ENCODE measurements at regions of chr4 and their contacts with region 1.

Region 1: DNA sequence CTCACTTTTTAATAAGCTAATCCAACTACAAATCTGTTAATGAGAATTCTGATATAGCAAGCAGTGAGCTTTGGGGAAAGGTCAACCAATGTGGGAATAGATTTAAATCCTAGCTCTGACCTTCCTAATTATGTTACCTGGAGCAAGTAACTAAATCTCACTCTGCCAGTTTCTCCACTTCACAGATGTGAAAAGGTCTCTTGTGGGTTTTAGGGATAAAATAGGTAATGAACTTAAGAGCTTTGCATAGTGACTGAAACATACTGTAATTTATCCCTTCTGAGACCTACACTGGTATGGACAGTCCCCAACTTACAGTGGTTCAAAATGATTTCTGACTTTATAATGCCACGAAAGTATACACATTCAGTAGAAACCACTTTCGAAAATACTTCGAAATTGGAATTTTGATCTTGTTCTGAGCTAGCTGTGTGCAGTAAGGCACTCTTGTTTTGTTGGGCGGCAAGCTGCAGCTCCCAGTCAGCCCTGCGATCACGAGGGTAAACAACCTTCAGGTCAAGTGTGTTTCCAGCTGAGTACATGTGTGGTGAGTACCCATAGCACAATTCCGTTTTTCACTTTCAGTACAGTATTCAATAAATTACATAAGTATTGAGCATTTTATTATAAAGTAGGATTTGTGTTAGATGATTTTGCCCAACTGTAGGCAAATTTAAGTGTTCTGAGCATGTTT is 93.7 kb downstream of the ADGRL3 start:
- DNase-seq: no peak
- ATAC-seq: no peak
- H3K4me3 ChIP-seq: no peak overlapping the region
- H3K4me3 Mint-ChIP-seq: no peak overlapping the region
- H3K27ac ChIP-seq: no peak overlapping the region
- H3K27ac Mint-ChIP-seq: no peak overlapping the region
- H3K4me1 ChIP-seq: no peaks in the 10 kb centered on the region
- H3K4me1 Mint-ChIP-seq: no peaks in the 10 kb centered on the region
- H3K27me3 ChIP-seq: no peaks in the 10 kb centered on the region
- H3K27me3 Mint-ChIP-seq: no peaks in the 10 kb centered on the region

Region 2: DNA sequence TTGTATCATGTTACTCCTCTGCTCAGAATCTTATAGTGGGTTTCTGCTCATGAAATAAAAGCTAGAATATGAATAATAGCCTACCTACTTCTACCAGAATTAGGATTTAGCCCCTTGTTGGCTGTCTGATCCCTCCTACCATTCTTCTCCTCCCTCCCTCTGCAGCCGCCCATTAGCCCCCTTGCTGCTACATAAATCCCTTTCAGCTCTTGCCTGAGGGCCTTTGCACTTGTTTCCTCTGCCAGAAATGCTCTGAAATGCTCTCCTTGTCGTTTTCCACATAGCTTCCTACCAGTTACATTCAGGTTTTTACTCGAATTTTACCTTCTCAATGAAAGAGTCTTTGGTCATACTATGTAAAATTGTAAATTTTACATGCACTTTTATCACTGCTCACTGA is 65.4 kb after region 1 on chr4:
- CTCF ChIA-PET with region 1: no interaction called
- POLR2A ChIA-PET with region 1: no interaction called
- intact Hi-C with region 1: loop called in 1 of 2 experiments (anchors 10 kb)
- DNase-seq: no peak
- ATAC-seq: no peak
- H3K4me3 ChIP-seq: no peak overlapping the region
- H3K4me3 Mint-ChIP-seq: no peak overlapping the region
- H3K27ac ChIP-seq: no peak overlapping the region
- H3K27ac Mint-ChIP-seq: no peak overlapping the region
- H3K4me1 ChIP-seq: no peaks in the 10 kb centered on the region
- H3K4me1 Mint-ChIP-seq: no peaks in the 10 kb centered on the region
- H3K27me3 ChIP-seq: no peaks in the 10 kb centered on the region
- H3K27me3 Mint-ChIP-seq: no peaks in the 10 kb centered on the region